ENCODE measurements at regions of chr20 and their contacts with region 1.

Region 1: GRCh38 chr20:20860078-20860806 is 147.8 kb upstream of the RALGAPA2 start:
- DNase-seq: peak; percentile 71
- H3K4me3 ChIP-seq: no peak overlapping the region
- H3K27ac ChIP-seq: no peak overlapping the region
- H3K4me1 ChIP-seq: no peaks in the 10 kb centered on the region
- H3K27me3 ChIP-seq: peaks cover 4% of the 10 kb centered on the region
- CTCF ChIP-seq: peak; percentile 56 to 90 (median 87)
- POLR2A ChIP-seq: no peak

Region 2: GRCh38 chr20:20369250-20370093 is 490.8 kb before region 1 on chr20:
- intact Hi-C with region 1: no loop called
- DNase-seq: no peak
- H3K4me3 ChIP-seq: peak overlapping the region; percentile 8 to 21
- H3K27ac ChIP-seq: no peak overlapping the region
- H3K4me1 ChIP-seq: peaks cover 10% of the 10 kb centered on the region
- H3K27me3 ChIP-seq: peaks cover 52% of the 10 kb centered on the region
- CTCF ChIP-seq: no peak
- POLR2A ChIP-seq: no peak

Region 3: GRCh38 chr20:21125849-21126580 is 265.8 kb after region 1 on chr20 and contains the start of gene KIZ:
- intact Hi-C with region 1: loop called (anchors 10 kb)
- DNase-seq: peak; percentile 96
- H3K4me3 ChIP-seq: peak within 1 kb of the TSS; percentile 68 to 93
- H3K27ac ChIP-seq: peak within 1 kb of the TSS; percentile 81
- H3K4me1 ChIP-seq: no peaks in the 10 kb centered on the region
- H3K27me3 ChIP-seq: no peaks in the 10 kb centered on the region
- CTCF ChIP-seq: peak in 3 of 4 experiments; percentile 23 to 65 (median 62)
- POLR2A ChIP-seq: peak; percentile 77
- total RNA-seq, gene KIZ: 39.9 to 41.0 TPM

Region 4: DNA sequence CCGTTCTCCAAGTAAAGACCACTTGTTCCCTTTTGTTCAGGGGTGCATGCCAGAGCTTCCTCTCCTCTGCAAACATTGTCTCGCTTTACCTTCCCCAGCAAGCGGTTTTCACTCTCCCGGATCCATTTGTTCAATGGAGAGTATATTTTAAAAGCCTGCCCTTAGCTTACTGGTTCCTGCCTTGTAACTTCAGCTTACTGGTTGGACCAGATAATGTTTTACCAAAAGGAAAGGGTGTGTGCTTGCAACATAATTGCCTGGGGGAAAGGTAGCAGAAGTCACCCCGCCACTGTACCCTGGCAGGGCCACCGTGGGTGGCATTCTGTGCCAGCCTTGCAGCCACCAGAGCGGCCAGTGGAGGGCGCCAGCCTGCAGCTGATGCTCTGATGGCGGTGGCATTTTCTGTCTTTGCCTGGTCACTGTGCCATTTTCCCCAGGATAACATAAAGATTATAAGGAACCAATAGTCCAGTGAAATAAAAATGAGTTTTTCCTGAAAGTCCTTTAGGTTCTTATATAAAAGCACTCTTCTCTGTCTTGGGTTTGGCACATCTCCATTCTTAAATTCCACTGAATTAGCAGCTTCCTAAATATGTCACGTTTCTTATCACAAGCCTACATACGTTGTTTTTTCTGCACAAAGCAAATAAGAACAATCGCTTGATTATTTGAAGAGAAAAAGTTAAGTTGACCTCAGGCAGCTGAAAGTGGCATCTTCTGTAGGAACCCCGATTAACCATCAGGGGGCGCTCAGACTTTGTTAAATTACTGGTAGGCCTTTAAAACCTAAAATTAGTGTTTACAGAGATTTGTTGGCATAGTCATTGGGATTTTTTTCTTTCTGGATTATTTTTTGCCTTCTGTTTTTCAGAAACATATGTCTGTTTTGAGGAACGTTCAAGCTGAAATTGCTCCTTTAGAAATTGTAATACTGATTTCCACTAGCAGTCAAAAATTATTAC is 375.5 kb after region 1 on chr20:
- intact Hi-C with region 1: loop called (anchors 10 kb)
- DNase-seq: peak; percentile 70
- H3K4me3 ChIP-seq: no peak overlapping the region
- H3K27ac ChIP-seq: no peak overlapping the region
- H3K4me1 ChIP-seq: no peaks in the 10 kb centered on the region
- H3K27me3 ChIP-seq: no peaks in the 10 kb centered on the region
- CTCF ChIP-seq: peak; percentile 49 to 74 (median 63)
- POLR2A ChIP-seq: no peak